ENCODE measurements at regions of chr7 and their contacts with region 1.

Region 1: GRCh38 chr7:103065667-103066066 is 8.9 kb downstream of the FBXL13 start:
- DNase-seq: no peak
- H3K4me3 ChIP-seq: no peak overlapping the region
- H3K27ac ChIP-seq: no peak overlapping the region
- H3K27me3 ChIP-seq: no peaks in the 10 kb centered on the region
- CTCF ChIP-seq: peak; percentile 60

Region 2: GRCh38 chr7:102834999-102835398 is 230.7 kb before region 1 on chr7:
- CTCF ChIA-PET with region 1: interaction called, 20 read pairs
- POLR2A ChIA-PET with region 1: no interaction called
- DNase-seq: peak; percentile 38
- H3K4me3 ChIP-seq: no peak overlapping the region
- H3K27ac ChIP-seq: no peak overlapping the region
- H3K27me3 ChIP-seq: no peaks in the 10 kb centered on the region
- CTCF ChIP-seq: no peak

Region 3: DNA sequence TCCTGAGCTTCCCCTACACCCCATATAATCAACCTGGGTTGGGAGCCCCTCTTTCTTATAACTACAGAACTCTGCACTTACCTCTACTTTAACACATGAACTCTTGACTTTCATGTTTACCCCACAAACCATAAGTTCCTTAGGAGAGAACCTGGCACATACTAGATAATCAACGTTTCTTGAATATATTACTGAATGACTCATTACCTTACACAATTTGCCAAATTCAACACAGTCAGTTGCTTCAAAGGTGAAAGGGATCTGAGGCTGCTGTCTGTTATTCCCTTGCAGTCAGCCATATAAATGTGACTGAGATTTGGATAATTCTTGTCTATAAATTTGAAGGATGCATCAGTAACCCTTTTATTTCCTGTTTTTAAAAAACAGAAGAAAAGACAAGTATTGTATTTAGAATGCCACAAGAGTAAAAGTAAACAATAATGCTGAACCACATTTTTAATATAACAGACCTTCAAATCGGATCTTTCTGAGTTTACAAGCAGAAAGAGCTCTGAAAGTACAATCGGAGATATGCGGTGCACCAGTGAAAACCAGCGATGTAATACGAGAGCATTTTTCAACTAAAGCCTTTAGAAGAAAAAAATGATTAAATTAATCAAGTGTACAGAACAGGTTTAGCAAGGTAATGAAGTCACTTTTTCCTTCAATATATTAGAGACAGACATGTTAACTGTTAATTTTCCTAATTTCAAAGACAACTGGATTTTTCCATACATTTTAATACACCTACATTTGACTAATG is 182.4 kb before region 1 on chr7:
- CTCF ChIA-PET with region 1: interaction called, 11 read pairs
- POLR2A ChIA-PET with region 1: no interaction called
- DNase-seq: no peak
- H3K4me3 ChIP-seq: no peak overlapping the region
- H3K27ac ChIP-seq: no peak overlapping the region
- H3K27me3 ChIP-seq: no peaks in the 10 kb centered on the region
- CTCF ChIP-seq: no peak

Region 4: DNA sequence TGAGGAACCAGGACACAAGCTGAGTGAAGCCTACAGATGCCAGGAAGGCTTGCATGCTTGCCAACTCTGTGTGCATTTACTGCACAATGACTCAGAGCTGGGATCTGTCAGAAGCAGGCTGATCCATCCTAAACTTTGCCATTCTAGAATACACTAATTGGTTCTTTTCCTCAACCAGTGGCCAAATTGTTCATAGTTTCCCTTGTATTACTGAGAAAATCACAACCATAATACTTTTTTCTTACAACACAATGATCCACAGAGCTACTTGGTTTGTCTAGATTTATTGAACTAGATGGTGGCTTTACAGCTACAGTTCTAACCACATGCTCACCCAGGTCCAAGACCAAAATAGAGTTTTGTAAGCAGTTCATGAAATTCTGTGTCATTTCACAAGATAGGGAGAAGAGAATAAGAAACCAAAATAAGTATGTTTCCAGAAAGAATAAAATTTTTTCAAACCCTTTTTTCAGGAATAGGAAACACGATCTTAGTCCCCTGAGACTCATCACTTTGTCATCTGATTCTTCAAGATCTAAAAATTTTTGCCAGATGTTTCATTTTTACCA is 173.9 kb before region 1 on chr7:
- CTCF ChIA-PET with region 1: interaction called, 12 read pairs
- POLR2A ChIA-PET with region 1: interaction called, 3 read pairs
- DNase-seq: peak; percentile 61
- H3K4me3 ChIP-seq: no peak overlapping the region
- H3K27ac ChIP-seq: no peak overlapping the region
- H3K27me3 ChIP-seq: no peaks in the 10 kb centered on the region
- CTCF ChIP-seq: no peak

Region 5: DNA sequence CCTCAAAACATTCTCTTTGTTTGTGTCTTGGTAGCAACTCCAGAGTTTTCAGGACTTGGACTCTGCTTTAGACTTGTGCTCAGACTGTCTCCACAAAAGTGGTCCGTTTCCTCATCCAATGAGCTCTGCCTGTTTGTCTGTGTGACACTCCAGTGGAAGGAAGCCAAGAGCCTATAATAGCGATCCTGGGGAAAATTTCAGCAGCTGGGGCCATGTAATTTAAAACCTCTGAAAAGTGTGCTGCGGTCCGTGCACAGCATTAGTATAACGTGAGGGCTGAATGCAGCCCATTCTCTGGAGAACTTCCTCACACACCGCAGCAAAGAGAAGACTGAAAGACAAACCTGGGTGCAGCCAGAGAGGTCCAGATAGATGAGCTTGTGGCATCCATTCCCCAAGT is 152.9 kb before region 1 on chr7 and contains the start of gene LRRC17:
- CTCF ChIA-PET with region 1: interaction called, 22 read pairs
- POLR2A ChIA-PET with region 1: interaction called, 14 read pairs
- DNase-seq: peak; percentile 93
- H3K4me3 ChIP-seq: peak within 1 kb of the TSS; percentile 71
- H3K27ac ChIP-seq: peak within 1 kb of the TSS; percentile 83
- H3K27me3 ChIP-seq: no peaks in the 10 kb centered on the region
- CTCF ChIP-seq: no peak
- polyA plus RNA-seq, gene LRRC17: 813 and 964 TPM in 2 replicates

Region 6: GRCh38 chr7:102933763-102934162 is 131.9 kb before region 1 on chr7:
- CTCF ChIA-PET with region 1: interaction called, 11 read pairs
- POLR2A ChIA-PET with region 1: no interaction called
- DNase-seq: peak; percentile 95
- H3K4me3 ChIP-seq: no peak overlapping the region
- H3K27ac ChIP-seq: peak overlapping the region; percentile 90
- H3K27me3 ChIP-seq: no peaks in the 10 kb centered on the region
- CTCF ChIP-seq: no peak

Region 7: DNA sequence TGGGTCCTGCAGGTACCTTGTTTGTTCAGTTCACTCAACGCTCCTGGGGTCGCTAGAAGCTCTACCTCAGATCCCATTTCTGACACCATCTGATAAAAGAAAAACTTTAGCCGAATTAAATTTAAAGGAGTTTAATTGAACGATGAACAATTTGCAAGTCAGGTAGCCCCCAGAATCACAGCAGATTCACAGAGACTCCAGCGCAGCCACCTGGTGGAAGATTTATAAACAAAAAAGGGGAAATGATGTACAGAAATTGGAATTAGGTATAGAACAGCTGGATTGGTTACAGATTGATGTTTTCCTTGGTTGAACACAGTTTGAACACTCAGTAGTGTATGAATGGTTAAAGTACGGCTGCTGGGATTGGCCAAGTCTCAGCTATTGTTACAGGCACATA is 14.1 kb before region 1 on chr7:
- CTCF ChIA-PET with region 1: interaction called, 18 read pairs
- POLR2A ChIA-PET with region 1: no interaction called
- DNase-seq: no peak
- H3K4me3 ChIP-seq: no peak overlapping the region
- H3K27ac ChIP-seq: no peak overlapping the region
- H3K27me3 ChIP-seq: no peaks in the 10 kb centered on the region
- CTCF ChIP-seq: no peak

Region 8: DNA sequence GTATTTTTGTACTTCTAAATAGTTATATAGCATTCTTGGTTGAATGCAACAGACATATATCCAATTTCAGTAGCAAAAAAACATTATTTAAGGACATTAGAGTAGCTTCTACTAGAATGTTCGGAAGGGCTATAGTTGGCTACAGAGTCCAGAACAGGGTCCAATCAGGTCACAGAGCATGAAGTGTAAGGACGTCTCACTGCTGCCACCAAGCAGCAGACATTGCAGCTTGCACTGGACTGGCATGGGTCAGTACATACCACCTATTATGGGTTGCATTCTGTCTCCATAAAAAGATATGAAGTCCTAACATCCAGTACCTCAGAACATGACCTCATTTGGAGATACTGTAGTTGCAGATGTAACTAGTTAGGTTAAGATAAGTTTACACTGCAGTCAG is 1350.0 kb after region 1 on chr7:
- CTCF ChIA-PET with region 1: no interaction called
- POLR2A ChIA-PET with region 1: no interaction called
- DNase-seq: no peak
- H3K4me3 ChIP-seq: no peak overlapping the region
- H3K27ac ChIP-seq: no peak overlapping the region
- H3K27me3 ChIP-seq: no peaks in the 10 kb centered on the region
- CTCF ChIP-seq: no peak